Transverse colon (tissue), 4 donors: ENCODE measurements at regions of chr9 and their contacts with region 1.

Region 1: DNA sequence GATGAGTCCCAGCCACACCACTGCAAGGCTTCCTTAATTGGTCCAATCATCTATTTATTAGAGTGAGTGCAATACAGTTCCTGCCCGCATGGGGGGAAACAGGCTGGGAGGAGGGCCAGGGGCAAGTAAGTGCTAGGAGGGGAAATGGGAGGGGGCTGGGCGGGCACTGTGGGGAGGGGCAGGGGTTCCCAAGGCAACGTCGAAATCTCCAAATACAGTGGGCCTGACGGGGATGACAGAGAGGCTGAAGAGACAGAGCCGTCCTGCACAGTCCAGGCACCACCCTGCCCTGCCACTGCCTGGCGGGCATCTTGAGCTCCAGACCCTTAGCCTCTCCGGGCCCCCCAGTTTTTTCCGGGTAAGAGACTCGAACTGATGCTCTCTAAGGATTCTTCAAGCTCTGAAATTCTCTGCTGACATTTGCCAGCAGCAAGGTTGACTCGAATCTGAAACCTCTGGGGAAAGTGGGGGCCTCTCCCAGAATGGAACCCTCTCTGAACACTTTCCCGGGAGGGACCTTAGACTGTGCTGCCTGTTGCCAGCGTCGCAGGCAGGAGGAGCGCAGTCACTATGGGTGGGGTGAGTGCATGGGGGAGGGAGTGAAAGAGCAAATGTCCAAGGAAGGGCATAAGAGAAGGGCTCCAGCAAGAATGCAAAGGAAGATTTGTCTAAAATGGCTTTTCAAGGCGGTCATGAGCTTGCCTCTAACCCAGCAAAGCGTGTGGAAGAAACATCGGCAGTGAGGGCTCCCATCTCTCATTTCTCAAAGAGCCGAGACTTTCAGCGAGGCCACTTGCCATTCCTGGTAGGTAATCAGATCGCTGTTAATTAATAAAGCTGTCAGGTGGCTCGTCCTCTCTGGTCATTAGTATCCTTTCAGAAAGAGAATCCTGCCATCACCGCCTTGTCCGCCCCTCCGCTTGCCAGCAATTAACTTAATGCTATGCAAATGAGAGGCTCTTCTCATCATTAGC is 99.0 kb downstream of the GTF3C4 start:
- DNase-seq: peak; percentile 66
- H3K4me3 ChIP-seq: peak overlapping the region; percentile 57 to 85 (median 72)
- H3K27ac ChIP-seq: peak overlapping the region; percentile 82 to 90 (median 84)
- H3K4me1 ChIP-seq: peaks cover 0 to 18% (median 11%) of the 10 kb centered on the region in 4 donors
- H3K27me3 ChIP-seq: no peaks in the 10 kb centered on the region
- CTCF ChIP-seq: peak; percentile 32 to 62 (median 44)
- EP300 ChIP-seq: no peak
- POLR2A ChIP-seq: peak; percentile 58

Region 2: DNA sequence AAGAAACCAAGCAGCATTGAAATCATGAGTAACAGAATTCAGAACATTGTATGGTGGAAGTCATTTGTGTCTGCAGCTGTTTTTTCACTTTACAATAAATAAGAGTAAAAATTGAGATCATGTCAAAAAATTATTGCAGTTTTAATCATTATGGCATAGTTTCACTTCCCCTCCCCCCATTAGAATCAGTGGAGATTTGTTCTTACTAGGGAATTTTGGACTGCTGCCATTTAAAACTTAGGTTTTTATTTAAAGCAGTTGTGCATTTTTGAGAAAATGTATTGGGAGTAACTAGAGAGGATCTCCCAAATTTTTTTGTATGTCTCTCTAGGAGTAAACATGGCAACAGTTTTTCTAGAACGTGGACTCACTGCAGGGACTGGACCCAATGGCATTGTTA is 78.5 kb before region 1 on chr9:
- in situ Hi-C with region 1: no loop called
- intact Hi-C with region 1: loop called (anchors 2 kb)
- DNase-seq: no peak
- H3K4me3 ChIP-seq: no peak overlapping the region
- H3K27ac ChIP-seq: no peak overlapping the region
- H3K4me1 ChIP-seq: no peaks in the 10 kb centered on the region
- H3K27me3 ChIP-seq: no peaks in the 10 kb centered on the region
- CTCF ChIP-seq: no peak
- EP300 ChIP-seq: no peak
- POLR2A ChIP-seq: no peak

Region 3: GRCh38 chr9:132901856-132902831 is 132.9 kb after region 1 on chr9:
- in situ Hi-C with region 1: no loop called
- intact Hi-C with region 1: no loop called
- DNase-seq: peak; percentile 67
- H3K4me3 ChIP-seq: no peak overlapping the region
- H3K27ac ChIP-seq: no peak overlapping the region
- H3K4me1 ChIP-seq: no peaks in the 10 kb centered on the region
- H3K27me3 ChIP-seq: no peaks in the 10 kb centered on the region
- CTCF ChIP-seq: peak; percentile 88 to 95 (median 91)
- EP300 ChIP-seq: no peak
- POLR2A ChIP-seq: no peak